ENCODE measurements at regions of chr2 and their contacts with region 1.

Region 1: DNA sequence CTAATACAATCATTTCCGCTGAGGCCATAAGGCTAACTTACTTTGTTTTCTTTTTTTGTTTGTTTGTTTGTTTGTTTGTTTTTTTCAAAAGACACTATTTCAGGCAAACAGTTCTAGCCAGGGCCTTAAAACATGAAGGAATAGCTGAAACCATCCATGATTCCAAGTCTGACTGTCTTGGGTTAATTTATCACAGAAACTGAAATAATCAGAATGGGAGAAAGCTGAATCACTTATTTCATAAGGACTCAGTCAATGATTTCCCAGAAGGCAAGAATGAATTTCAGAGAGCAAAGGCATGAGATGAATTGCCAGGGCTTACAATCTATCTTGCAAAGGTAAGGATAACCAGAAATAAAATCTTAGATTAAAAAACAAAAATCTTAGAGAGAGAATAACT is 1315.1 kb downstream of the SUCLG1 start:
- DNase-seq: no peak

Region 2: DNA sequence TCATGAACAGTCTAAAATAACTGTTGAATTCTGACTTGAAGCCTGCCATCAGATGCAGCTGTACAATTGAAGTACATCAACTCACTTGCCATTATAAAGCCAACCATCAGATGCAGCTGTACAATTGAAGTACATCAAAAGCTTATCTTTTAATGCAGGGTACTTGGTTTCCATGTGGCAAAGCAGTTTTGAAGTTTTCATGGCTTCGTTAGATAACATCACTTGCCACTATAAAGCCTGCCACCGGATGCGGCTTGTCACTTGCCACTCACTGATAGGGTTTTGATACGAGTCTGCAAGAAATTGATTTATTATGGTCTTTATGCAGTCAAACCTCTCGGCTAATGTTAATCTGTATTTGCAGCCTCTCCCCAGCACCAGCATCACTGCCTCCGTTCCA is 290.6 kb before region 1 on chr2:
- intact Hi-C with region 1: no loop called
- DNase-seq: no peak

Region 3: GRCh38 chr2:83109274-83109673 is 34.7 kb before region 1 on chr2:
- intact Hi-C with region 1: loop called in 1 of 2 experiments (anchors 2 kb)
- DNase-seq: no peak